ENCODE measurements at regions of chr3 and their contacts with region 1.

Region 1: GRCh38 chr3:184543843-184544512 is 17.6 kb upstream of the EPHB3 start:
- DNase-seq: peak; percentile 57 to 87 (median 68)
- ATAC-seq: peak; percentile 88
- H3K4me3 ChIP-seq: no peak overlapping the region
- H3K4me3 Mint-ChIP-seq: no peak overlapping the region
- H3K27ac ChIP-seq: no peak overlapping the region
- H3K27ac Mint-ChIP-seq: peak overlapping the region; percentile 35
- H3K4me1 ChIP-seq: peaks cover 11% of the 10 kb centered on the region
- H3K4me1 Mint-ChIP-seq: peaks cover 22% of the 10 kb centered on the region
- H3K27me3 ChIP-seq: peaks cover 5 to 7% of the 10 kb centered on the region in 2 experiments
- H3K27me3 Mint-ChIP-seq: peaks cover 22% of the 10 kb centered on the region
- CTCF ChIP-seq: peak; percentile 85

Region 2: DNA sequence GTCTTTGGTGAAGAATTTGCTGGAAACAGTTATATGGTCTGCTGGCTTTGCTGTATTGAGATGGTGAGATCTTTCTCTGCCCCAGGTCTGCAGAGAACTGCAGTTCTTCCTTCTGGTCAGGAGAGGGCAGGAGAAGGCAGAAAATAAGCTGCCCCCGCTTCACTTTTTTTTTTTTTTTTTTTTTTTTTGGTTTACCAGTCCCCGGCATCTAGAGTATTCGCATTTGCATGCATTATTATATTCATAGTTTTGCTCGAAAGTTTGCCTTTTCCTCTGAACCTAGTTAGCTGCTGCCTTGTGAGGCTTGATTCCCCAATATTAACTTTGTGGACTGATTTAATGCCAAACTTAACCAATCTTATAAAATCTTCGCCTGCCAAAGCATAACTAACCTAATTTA is 648.7 kb before region 1 on chr3:
- CTCF ChIA-PET with region 1: interaction called, 5 read pairs
- POLR2A ChIA-PET with region 1: no interaction called
- intact Hi-C with region 1: loop called (anchors 1 to 5 kb)
- DNase-seq: peak in 9 of 14 experiments; percentile 6 to 76 (median 20)
- ATAC-seq: peak; percentile 88
- H3K4me3 ChIP-seq: no peak overlapping the region
- H3K4me3 Mint-ChIP-seq: no peak overlapping the region
- H3K27ac ChIP-seq: no peak overlapping the region
- H3K27ac Mint-ChIP-seq: no peak overlapping the region
- H3K4me1 ChIP-seq: peaks cover 4% of the 10 kb centered on the region
- H3K4me1 Mint-ChIP-seq: no peaks in the 10 kb centered on the region
- H3K27me3 ChIP-seq: peaks cover 5 to 6% of the 10 kb centered on the region in 2 experiments
- H3K27me3 Mint-ChIP-seq: peaks cover 13% of the 10 kb centered on the region
- CTCF ChIP-seq: peak; percentile 75

Region 3: DNA sequence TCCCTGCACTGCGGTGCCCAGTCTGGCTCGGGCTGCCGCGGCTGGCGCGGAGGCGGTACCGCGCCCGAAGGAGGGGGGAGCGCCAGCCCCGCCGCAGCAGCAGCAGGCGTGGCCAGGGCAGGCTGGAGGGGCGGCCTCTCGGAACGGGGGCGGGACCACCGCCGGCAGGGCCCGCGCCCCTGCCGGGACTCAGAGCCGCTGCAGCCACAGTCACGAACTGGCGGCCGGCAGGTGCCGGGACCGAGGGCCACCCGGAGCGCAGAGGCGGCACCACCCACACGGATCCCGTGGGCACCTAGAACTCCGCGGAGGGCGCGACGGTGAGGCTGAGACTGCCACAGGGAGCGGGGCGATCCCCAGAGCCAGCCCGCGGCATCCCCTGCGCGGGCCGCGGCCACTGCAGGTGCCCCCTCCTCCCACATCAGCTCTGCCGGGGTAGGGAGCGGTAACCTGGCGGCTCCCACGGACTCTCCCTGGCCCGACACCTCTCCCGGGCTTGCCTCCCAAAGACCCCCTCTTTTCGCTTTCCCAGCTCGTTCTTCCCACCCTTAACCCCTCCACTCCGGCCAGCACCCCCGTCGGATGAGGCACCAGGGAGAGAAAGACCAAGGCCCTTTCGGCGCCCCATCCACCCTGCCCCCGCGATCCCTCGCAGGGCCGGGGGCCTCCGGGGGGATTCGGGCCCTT is 314.4 kb before region 1 on chr3 and contains the start of gene VWA5B2:
- CTCF ChIA-PET with region 1: interaction called, 3 read pairs
- POLR2A ChIA-PET with region 1: no interaction called
- intact Hi-C with region 1: loop called in 1 of 2 experiments (anchors 2 kb)
- DNase-seq: peak; percentile 46 to 89 (median 64)
- ATAC-seq: peak; percentile 97
- H3K4me3 ChIP-seq: peak within 1 kb of the TSS; percentile 53
- H3K4me3 Mint-ChIP-seq: peak within 1 kb of the TSS; percentile 85
- H3K27ac ChIP-seq: no peak within 1 kb of the TSS
- H3K27ac Mint-ChIP-seq: no peak within 1 kb of the TSS
- H3K4me1 ChIP-seq: peaks cover 24% of the 10 kb centered on the region
- H3K4me1 Mint-ChIP-seq: peaks cover 14% of the 10 kb centered on the region
- H3K27me3 ChIP-seq: peaks cover 51 to 52% of the 10 kb centered on the region in 2 experiments
- H3K27me3 Mint-ChIP-seq: peaks cover 72% of the 10 kb centered on the region
- CTCF ChIP-seq: peak; percentile 23
- total RNA-seq, gene VWA5B2: not detected

Region 4: DNA sequence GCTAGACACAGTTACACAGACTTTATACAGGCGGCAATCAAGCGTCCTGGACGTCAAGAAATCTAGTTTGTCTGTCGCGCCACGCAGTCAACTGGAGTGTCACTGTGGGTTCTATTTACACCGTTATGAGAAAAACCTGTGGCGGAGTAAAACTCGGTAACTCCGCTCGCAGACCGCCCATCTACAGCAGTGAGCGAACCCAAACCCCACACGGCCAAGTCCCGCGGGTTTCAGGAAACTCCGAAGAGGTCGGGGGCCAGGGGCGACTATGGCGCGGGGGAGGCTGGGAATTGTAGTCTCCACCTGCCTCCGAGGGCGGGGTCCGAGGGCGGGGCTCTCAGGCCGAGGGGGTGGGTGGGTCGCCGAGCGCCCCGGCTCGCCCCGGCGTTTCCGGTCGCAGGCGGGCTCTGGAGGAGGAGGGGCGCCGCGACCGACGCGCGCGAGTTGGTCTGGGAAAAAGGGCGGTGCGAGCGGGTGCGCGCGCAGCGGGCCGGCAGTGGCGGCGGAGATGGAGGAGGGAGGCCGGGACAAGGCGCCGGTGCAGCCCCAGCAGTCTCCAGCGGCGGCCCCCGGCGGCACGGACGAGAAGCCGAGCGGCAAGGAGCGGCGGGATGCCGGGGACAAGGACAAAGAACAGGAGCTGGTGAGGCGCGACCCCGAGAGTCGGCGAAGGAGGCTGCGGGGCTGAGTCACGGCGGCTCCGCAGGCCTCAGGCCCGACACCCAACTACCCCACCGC is 245.1 kb before region 1 on chr3 and contains the start of gene PSMD2:
- CTCF ChIA-PET with region 1: no interaction called
- POLR2A ChIA-PET with region 1: no interaction called
- intact Hi-C with region 1: no loop called
- DNase-seq: peak; percentile 94 to 99 (median 98)
- ATAC-seq: peak; percentile 93
- H3K4me3 ChIP-seq: peak within 1 kb of the TSS; percentile 95
- H3K4me3 Mint-ChIP-seq: peak within 1 kb of the TSS; percentile 96
- H3K27ac ChIP-seq: peak within 1 kb of the TSS; percentile 60 to 86
- H3K27ac Mint-ChIP-seq: peak within 1 kb of the TSS; percentile 91
- H3K4me1 ChIP-seq: peaks cover 24% of the 10 kb centered on the region
- H3K4me1 Mint-ChIP-seq: peaks cover 26% of the 10 kb centered on the region
- H3K27me3 ChIP-seq: no peaks in the 10 kb centered on the region
- H3K27me3 Mint-ChIP-seq: no peaks in the 10 kb centered on the region
- CTCF ChIP-seq: no peak
- total RNA-seq, gene PSMD2: 159 TPM

Region 5: GRCh38 chr3:184371570-184372018 is 172.4 kb before region 1 on chr3:
- CTCF ChIA-PET with region 1: interaction called, 5 read pairs
- POLR2A ChIA-PET with region 1: no interaction called
- intact Hi-C with region 1: loop called (anchors 1 to 2 kb)
- DNase-seq: peak; percentile 42 to 83 (median 57)
- ATAC-seq: peak; percentile 100
- H3K4me3 ChIP-seq: no peak overlapping the region
- H3K4me3 Mint-ChIP-seq: no peak overlapping the region
- H3K27ac ChIP-seq: no peak overlapping the region
- H3K27ac Mint-ChIP-seq: no peak overlapping the region
- H3K4me1 ChIP-seq: peaks cover 5% of the 10 kb centered on the region
- H3K4me1 Mint-ChIP-seq: peaks cover 6% of the 10 kb centered on the region
- H3K27me3 ChIP-seq: peaks cover 0 to 10% of the 10 kb centered on the region in 2 experiments
- H3K27me3 Mint-ChIP-seq: peaks cover 7% of the 10 kb centered on the region
- CTCF ChIP-seq: peak; percentile 76

Region 6: DNA sequence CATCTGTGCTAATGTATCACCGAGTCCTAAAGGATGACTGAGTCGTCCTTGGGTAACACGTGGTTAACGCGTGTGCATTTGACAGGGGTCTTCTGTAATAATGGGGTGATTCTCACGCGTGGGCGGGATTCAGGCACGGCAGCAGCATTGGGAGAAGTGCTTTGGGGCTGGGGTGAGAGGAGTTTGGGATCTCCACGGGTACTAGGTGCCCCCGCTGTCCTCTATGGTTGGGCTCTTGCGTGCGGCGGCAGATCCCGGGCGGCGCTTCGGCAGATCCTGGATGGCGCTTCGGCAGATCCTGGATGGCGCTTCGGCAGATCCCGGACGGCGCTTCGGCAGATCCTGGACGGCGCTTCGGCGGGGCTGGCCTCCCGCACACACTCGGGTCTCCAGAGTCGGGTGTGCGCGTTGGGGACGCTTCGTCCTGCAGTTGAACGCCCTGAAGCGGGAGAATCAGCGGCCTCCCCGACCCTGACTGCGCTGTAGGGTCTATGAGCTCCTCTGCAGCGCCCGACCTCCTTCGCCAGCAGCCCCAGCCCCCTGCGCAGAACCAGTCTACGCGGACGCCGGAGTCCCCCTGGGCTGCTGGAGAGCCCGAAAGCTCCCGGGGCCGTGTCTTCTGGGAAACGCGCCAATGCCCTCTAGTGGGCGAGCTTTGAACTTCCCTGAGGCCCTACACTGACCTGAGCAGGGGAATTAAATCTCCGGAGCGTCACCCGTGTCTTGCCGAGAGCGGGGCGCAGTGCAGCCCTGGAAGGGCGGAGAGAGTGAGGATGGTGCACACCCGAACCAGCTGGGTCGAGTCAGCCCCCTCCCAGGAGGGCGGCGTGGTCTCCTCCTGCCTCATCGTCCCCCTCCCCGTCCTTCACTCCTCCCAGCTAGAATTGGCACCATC is 30.5 kb before region 1 on chr3:
- CTCF ChIA-PET with region 1: interaction called, 16 read pairs
- POLR2A ChIA-PET with region 1: interaction called, 5 read pairs
- intact Hi-C with region 1: loop called in 1 of 2 experiments (anchors 2 kb)
- DNase-seq: peak; percentile 70 to 87 (median 77)
- ATAC-seq: peak; percentile 99
- H3K4me3 ChIP-seq: peak overlapping the region; percentile 46
- H3K4me3 Mint-ChIP-seq: peak overlapping the region; percentile 23
- H3K27ac ChIP-seq: no peak overlapping the region
- H3K27ac Mint-ChIP-seq: no peak overlapping the region
- H3K4me1 ChIP-seq: peaks cover 14% of the 10 kb centered on the region
- H3K4me1 Mint-ChIP-seq: peaks cover 5% of the 10 kb centered on the region
- H3K27me3 ChIP-seq: peaks cover 31 to 60% of the 10 kb centered on the region in 2 experiments
- H3K27me3 Mint-ChIP-seq: peaks cover 79% of the 10 kb centered on the region
- CTCF ChIP-seq: peak; percentile 77

Region 7: DNA sequence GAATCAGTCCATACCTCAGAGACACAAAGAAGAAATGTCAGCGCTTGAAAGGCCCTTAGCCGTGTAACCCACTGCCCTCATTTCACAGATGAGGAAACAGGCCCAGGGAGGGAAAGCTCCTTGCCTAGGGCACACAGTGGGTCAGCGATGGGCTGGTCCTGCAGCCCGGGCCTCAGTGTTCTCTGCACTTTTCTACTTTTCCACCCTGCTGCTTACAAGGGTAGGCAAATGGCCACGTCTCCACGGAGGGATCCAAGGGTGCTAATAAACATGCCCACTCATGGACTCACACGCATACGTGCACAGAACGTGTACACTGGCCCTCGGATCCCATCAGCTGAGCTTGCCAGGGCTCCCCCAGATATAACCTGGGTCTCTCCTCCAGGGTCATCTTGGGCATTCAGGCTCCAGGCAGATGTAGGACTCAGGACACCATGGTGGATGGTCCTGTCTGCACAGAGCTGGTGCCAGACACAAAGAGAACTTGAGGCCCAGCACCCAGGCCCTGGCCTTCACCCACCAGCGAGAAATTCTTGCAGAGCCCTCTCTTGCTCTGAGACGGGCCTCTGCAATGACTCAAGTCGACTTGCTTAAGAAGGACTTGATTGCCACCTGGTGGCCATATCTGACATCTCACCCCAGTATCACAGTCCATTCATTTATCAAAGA is 233.5 kb after region 1 on chr3:
- CTCF ChIA-PET with region 1: interaction called, 5 read pairs
- POLR2A ChIA-PET with region 1: no interaction called
- intact Hi-C with region 1: loop called in 1 of 2 experiments (anchors 5 kb)
- DNase-seq: peak; percentile 66 to 91 (median 76)
- ATAC-seq: peak; percentile 99
- H3K4me3 ChIP-seq: no peak overlapping the region
- H3K4me3 Mint-ChIP-seq: no peak overlapping the region
- H3K27ac ChIP-seq: no peak overlapping the region
- H3K27ac Mint-ChIP-seq: no peak overlapping the region
- H3K4me1 ChIP-seq: peaks cover 2% of the 10 kb centered on the region
- H3K4me1 Mint-ChIP-seq: no peaks in the 10 kb centered on the region
- H3K27me3 ChIP-seq: no peaks in the 10 kb centered on the region
- H3K27me3 Mint-ChIP-seq: peaks cover 26% of the 10 kb centered on the region
- CTCF ChIP-seq: peak; percentile 88

Measured in CD4-positive, alpha-beta T cell (primary cell).